WTC11 (cell line): ENCODE measurements at regions of chr2 and their contacts with region 1.

Region 1: DNA sequence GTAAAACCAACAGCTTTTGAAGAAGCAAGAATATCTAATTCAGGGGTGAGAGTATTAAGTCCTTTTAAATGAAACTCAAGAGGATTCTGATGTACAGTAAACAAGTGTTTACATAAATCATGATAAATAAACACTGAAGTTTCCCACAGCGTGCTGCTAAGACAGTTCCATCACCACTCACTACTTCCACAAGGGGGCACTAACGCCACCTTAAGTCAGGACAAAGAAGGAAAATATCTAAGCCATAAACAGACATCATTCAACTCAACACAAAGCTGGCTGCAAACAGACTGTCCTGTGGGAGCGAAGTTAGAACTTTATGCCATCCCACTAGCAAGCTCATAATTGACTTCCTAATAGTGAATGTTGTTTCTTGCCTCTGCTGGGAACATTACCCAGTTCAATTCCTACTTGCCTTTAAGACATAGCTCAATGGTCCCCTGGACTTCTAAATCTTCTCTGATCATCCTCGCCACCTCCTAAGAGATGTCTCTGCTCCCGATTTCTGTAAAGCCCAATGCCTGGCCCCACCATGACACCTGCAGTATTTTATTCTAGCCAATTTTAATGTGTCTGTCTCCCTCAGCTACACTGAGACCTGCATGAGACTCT is 36.5 kb downstream of the MRPL44 start:
- DNase-seq: peak; percentile 64
- ATAC-seq: peak; percentile 64
- H3K4me3 Mint-ChIP-seq: no peak overlapping the region
- H3K27ac Mint-ChIP-seq: no peak overlapping the region
- H3K4me1 Mint-ChIP-seq: peaks cover 8% of the 10 kb centered on the region
- H3K27me3 Mint-ChIP-seq: no peaks in the 10 kb centered on the region
- CTCF ChIP-seq: peak; percentile 72

Region 2: DNA sequence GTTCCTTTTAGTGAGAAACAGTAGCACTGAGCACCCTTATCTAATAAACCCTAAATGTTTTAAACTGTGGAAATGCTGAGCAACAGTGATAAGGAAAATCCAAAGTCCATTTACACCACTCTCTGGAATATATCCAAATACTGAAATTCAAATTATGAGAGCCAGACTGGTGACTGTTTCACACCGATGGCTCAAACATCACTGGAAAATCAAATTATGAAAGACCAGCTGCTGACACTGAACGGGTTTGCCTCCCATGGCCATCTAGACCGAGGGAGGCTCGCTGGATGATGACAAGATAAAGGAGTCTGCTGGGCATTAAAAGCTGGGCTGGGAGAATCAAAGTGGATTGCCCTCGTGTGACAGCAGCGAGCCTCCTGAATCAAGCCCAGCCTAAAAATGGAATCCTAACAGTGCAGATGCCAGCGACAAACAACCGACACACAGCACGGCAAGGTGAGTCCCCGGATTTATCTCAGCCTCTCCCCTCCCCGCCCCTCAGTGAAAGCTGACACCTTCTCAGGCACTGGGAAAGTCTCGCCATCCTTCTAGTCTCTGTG is 15.1 kb after region 1 on chr2:
- CTCF ChIA-PET with region 1: interaction called, 25 read pairs
- POLR2A ChIA-PET with region 1: no interaction called
- DNase-seq: peak; percentile 59
- ATAC-seq: peak; percentile 97
- H3K4me3 Mint-ChIP-seq: peak overlapping the region; percentile 25; the same call in 1 of the 2 replicates
- H3K27ac Mint-ChIP-seq: no peak overlapping the region
- H3K4me1 Mint-ChIP-seq: peaks cover 43% of the 10 kb centered on the region
- H3K27me3 Mint-ChIP-seq: no peaks in the 10 kb centered on the region
- CTCF ChIP-seq: no peak

Region 3: DNA sequence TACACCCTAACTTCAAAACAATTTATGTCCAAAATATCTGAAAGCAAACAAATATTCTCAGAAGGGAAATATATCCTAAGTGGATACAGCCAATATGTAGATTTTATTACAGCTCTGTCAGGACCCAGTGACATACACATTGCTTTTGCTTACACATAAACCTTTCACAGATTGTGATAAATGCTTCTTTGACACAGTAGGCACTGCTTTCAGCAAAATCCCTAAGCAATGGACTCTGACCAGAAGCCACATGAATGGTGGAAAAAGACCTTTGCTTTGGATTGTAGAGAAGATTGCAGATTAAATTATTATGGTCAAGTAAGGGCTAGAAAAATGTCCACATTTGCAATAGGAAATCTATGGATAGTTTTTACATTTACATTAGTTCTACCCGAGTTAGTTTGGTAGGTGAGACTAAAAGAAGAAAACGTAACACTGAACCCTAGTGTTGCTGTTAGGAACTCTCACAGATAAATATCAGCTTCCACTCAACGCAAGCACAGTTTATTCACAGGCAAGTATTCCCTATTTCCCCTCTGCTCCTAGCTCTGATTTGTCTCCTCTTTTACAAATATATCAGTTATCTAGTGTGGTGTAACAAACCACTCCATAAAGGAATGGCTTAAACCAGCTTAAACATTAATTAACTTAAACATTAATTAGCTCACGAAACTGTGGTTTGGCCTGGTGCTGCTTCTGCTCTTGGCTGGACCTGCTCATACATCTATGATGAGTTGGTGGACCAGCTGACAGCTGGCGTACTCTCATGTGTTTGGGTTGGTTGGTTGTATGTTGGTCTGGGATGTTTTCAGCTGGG is 69.0 kb after region 1 on chr2:
- CTCF ChIA-PET with region 1: interaction called, 26 read pairs
- POLR2A ChIA-PET with region 1: no interaction called
- DNase-seq: no peak
- ATAC-seq: peak; percentile 63
- H3K4me3 Mint-ChIP-seq: no peak overlapping the region
- H3K27ac Mint-ChIP-seq: no peak overlapping the region
- H3K4me1 Mint-ChIP-seq: 0 out of 2 replicates have a peak, but pooled peaks cover 5% of the 10 kb centered on the region
- H3K27me3 Mint-ChIP-seq: no peaks in the 10 kb centered on the region
- CTCF ChIP-seq: no peak

Region 4: GRCh38 chr2:224284134-224284946 is 290.6 kb after region 1 on chr2:
- CTCF ChIA-PET with region 1: interaction called, 72 read pairs
- POLR2A ChIA-PET with region 1: no interaction called
- DNase-seq: peak; percentile 23
- ATAC-seq: peak; percentile 71
- H3K4me3 Mint-ChIP-seq: no peak overlapping the region
- H3K27ac Mint-ChIP-seq: no peak overlapping the region
- H3K4me1 Mint-ChIP-seq: no peaks in the 10 kb centered on the region; the same call in 1 of the 2 replicates
- H3K27me3 Mint-ChIP-seq: no peaks in the 10 kb centered on the region
- CTCF ChIP-seq: peak; percentile 51